Caco-2 (cell line): ENCODE measurements at regions of chr1 and their contacts with region 1.

Region 1: GRCh38 chr1:154182344-154183044 is 9.4 kb downstream of the TPM3 start:
- DNase-seq: peak; percentile 76 to 84
- H3K4me3 ChIP-seq: peak overlapping the region; percentile 70
- H3K4me3 Mint-ChIP-seq: peak overlapping the region; percentile 92
- H3K27ac Mint-ChIP-seq: peak overlapping the region; percentile 96
- H3K4me1 ChIP-seq: peaks cover 59% of the 10 kb centered on the region
- H3K4me1 Mint-ChIP-seq: peaks cover 56% of the 10 kb centered on the region
- H3K27me3 ChIP-seq: no peaks in the 10 kb centered on the region
- H3K27me3 Mint-ChIP-seq: no peaks in the 10 kb centered on the region
- CTCF ChIP-seq: peak in 1 of 2 experiments; percentile 14

Region 2: DNA sequence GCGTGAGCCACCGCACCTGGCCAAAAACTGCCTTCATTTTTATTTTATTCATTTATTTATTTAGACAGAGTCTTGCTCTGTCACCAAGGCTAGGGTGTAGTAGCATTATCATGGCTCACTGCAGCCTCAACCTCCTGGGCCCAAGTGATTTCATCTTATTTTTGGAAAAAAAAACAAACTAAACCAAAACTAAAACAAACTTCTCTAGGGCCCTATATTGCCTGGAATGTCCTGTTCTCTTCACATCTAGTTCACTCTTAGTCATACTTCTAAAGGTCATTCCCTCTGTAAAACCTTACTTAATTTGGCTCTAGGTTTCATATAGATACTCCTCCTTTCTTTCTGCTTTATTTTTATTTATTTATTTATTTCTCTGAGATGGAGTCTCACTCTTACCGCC is 176.4 kb before region 1 on chr1:
- CTCF ChIA-PET with region 1: no interaction called
- POLR2A ChIA-PET with region 1: no interaction called
- intact Hi-C with region 1: loop called (anchors 1 kb)
- DNase-seq: no peak
- H3K4me3 ChIP-seq: no peak overlapping the region
- H3K4me3 Mint-ChIP-seq: no peak overlapping the region
- H3K27ac Mint-ChIP-seq: no peak overlapping the region
- H3K4me1 ChIP-seq: peaks cover 16% of the 10 kb centered on the region
- H3K4me1 Mint-ChIP-seq: peaks cover 16% of the 10 kb centered on the region
- H3K27me3 ChIP-seq: no peaks in the 10 kb centered on the region
- H3K27me3 Mint-ChIP-seq: no peaks in the 10 kb centered on the region
- CTCF ChIP-seq: no peak

Region 3: GRCh38 chr1:154198756-154199562 is 16.5 kb after region 1 on chr1:
- CTCF ChIA-PET with region 1: interaction called, 3 read pairs
- POLR2A ChIA-PET with region 1: no interaction called
- intact Hi-C with region 1: loop called (anchors 1 kb)
- DNase-seq: peak; percentile 47 to 54
- H3K4me3 ChIP-seq: no peak overlapping the region
- H3K4me3 Mint-ChIP-seq: no peak overlapping the region
- H3K27ac Mint-ChIP-seq: no peak overlapping the region
- H3K4me1 ChIP-seq: 0 out of 2 replicates have a peak, but pooled peaks cover 3% of the 10 kb centered on the region
- H3K4me1 Mint-ChIP-seq: peaks cover 7% of the 10 kb centered on the region
- H3K27me3 ChIP-seq: no peaks in the 10 kb centered on the region
- H3K27me3 Mint-ChIP-seq: no peaks in the 10 kb centered on the region
- CTCF ChIP-seq: peak; percentile 62 to 63

Region 4: GRCh38 chr1:154236855-154237254 is 54.4 kb after region 1 on chr1:
- CTCF ChIA-PET with region 1: no interaction called
- POLR2A ChIA-PET with region 1: no interaction called
- intact Hi-C with region 1: loop called (anchors 1 kb)
- DNase-seq: no peak
- H3K4me3 ChIP-seq: no peak overlapping the region
- H3K4me3 Mint-ChIP-seq: peak overlapping the region; percentile 6
- H3K27ac Mint-ChIP-seq: no peak overlapping the region
- H3K4me1 ChIP-seq: peaks cover 27% of the 10 kb centered on the region
- H3K4me1 Mint-ChIP-seq: peaks cover 27% of the 10 kb centered on the region
- H3K27me3 ChIP-seq: no peaks in the 10 kb centered on the region
- H3K27me3 Mint-ChIP-seq: no peaks in the 10 kb centered on the region
- CTCF ChIP-seq: no peak

Region 5: GRCh38 chr1:154335025-154335714 is 152.7 kb after region 1 on chr1:
- CTCF ChIA-PET with region 1: interaction called, 5 read pairs
- POLR2A ChIA-PET with region 1: interaction called, 3 read pairs
- intact Hi-C with region 1: loop called (anchors 1 kb)
- DNase-seq: peak; percentile 86 to 88
- H3K4me3 ChIP-seq: no peak overlapping the region
- H3K4me3 Mint-ChIP-seq: peak overlapping the region; percentile 61
- H3K27ac Mint-ChIP-seq: peak overlapping the region; percentile 61
- H3K4me1 ChIP-seq: peaks cover 7% of the 10 kb centered on the region
- H3K4me1 Mint-ChIP-seq: peaks cover 32% of the 10 kb centered on the region
- H3K27me3 ChIP-seq: no peaks in the 10 kb centered on the region
- H3K27me3 Mint-ChIP-seq: no peaks in the 10 kb centered on the region
- CTCF ChIP-seq: peak; percentile 88 to 89